ENCODE measurements at regions of chr19 and their contacts with region 1.

Region 1: GRCh38 chr19:3314962-3315675 is 51.3 kb upstream of the NFIC start:
- DNase-seq: no peak
- H3K4me3 ChIP-seq: no peak overlapping the region
- H3K27ac ChIP-seq: no peak overlapping the region
- H3K4me1 ChIP-seq: no peaks in the 10 kb centered on the region
- H3K27me3 ChIP-seq: no peaks in the 10 kb centered on the region
- CTCF ChIP-seq: no peak
- EP300 ChIP-seq: no peak
- POLR2A ChIP-seq: no peak

Region 2: GRCh38 chr19:3407556-3408516 is 92.7 kb after region 1 on chr19:
- intact Hi-C with region 1: no loop called
- DNase-seq: peak in 4 of 5 donors; percentile 51 to 71 (median 62)
- H3K4me3 ChIP-seq: peak overlapping the region; percentile 24
- H3K27ac ChIP-seq: peak overlapping the region; percentile 50 to 75
- H3K4me1 ChIP-seq: peaks cover 16% of the 10 kb centered on the region
- H3K27me3 ChIP-seq: no peaks in the 10 kb centered on the region
- CTCF ChIP-seq: no peak
- EP300 ChIP-seq: no peak
- POLR2A ChIP-seq: no peak

Region 3: DNA sequence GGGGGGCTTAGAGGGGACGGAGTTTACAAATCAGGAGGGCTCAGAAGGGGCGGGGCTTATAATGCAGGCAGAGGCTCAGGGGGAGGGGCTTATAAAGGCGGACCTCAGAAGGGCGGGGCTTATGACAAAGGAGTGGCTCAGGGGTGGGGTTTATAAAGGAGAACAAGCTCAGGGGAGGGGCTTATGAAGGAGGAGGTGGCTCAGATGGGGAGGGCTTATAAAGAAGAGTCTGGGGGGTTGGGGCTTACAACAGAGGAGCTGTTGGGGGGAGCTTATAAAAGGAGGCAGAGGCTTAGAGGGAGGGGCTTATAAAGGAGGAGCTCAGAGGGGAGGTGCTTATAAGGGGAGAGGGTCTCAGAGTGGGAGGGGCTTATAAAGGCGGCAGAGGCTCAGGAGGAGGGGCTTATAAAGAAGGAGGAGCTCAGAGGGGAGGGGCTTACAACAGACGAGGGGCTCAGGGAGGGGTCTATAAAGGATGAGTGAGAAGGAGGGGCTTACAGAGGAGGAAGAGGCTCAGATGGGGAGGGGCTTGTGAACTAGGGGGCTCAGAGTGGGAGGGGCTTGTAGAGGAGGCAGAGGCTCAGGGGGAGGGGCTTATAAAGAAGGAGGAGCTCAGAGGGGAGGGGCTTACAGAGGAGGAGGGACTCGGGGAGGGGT is 164.2 kb after region 1 on chr19:
- intact Hi-C with region 1: loop called in 2 of 4 experiments (anchors 5 kb)
- DNase-seq: no peak
- H3K4me3 ChIP-seq: no peak overlapping the region
- H3K27ac ChIP-seq: no peak overlapping the region
- H3K4me1 ChIP-seq: no peaks in the 10 kb centered on the region
- H3K27me3 ChIP-seq: no peaks in the 10 kb centered on the region
- CTCF ChIP-seq: no peak
- EP300 ChIP-seq: no peak
- POLR2A ChIP-seq: no peak

Measured in ovary (tissue), 10 donors.